Left ventricle myocardium inferior (tissue), 1 donor: ENCODE measurements at regions of chr2 and their contacts with region 1.

Region 1: DNA sequence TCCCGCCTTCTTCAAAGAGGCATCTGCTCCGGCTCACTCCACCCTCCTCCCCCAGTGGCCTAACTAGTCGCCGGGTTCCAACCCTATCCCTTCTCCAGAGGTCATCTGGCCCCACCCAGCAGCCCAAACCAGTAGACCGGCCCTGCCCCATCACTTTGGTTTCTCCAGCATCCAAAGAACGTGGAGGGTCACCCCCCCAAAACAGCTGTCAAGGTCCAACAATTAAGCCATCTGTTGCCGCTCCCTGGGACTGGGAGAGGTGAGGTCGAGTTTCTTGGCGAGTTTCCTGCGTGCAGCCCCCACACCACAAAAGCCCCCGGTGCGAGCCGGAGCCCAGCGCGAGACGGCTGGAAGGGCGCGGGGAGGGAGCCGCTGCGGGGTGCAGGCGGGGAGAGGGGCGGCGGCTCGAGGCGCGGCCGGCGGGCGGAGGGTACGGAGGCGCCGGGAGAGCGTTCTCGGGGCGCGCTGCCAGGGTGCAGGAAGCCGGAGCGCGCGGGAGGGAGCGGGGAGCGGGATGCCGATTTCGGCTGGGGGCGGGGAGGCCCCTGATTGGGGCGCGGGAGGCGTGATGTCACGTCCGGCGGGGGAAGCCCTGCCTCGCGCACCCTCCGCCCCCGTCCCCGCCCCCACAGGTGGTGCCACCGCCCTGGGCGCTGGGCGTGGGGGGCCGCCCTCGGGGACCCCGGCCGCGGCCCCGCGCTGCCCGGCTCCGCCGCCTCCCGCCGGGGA is 571 bp upstream of the GPC1 start:
- DNase-seq: peak; percentile 94
- H3K4me3 ChIP-seq: peak overlapping the region; percentile 87
- H3K27ac ChIP-seq: peak overlapping the region; percentile 95
- H3K4me1 ChIP-seq: peaks cover 47% of the 10 kb centered on the region
- H3K27me3 ChIP-seq: peaks cover 60% of the 10 kb centered on the region
- CTCF ChIP-seq: no peak

Region 2: GRCh38 chr2:240244543-240244942 is 190.3 kb before region 1 on chr2:
- intact Hi-C with region 1: loop called (anchors 5 kb)
- DNase-seq: no peak
- H3K4me3 ChIP-seq: no peak overlapping the region
- H3K27ac ChIP-seq: peak overlapping the region; percentile 27
- H3K4me1 ChIP-seq: peaks cover 12% of the 10 kb centered on the region
- H3K27me3 ChIP-seq: no peaks in the 10 kb centered on the region
- CTCF ChIP-seq: no peak